A673 (cell line): ENCODE measurements at regions of chr9 and their contacts with region 1.

Region 1: GRCh38 chr9:27626244-27627187 is 53.2 kb upstream of the C9orf72 start:
- DNase-seq: no peak
- H3K4me3 ChIP-seq: no peak overlapping the region
- H3K27ac ChIP-seq: no peak overlapping the region
- H3K4me1 ChIP-seq: no peaks in the 10 kb centered on the region
- H3K27me3 ChIP-seq: no peaks in the 10 kb centered on the region
- CTCF ChIP-seq: no peak

Region 2: GRCh38 chr9:26612211-26612610 is 1014.3 kb before region 1 on chr9:
- CTCF ChIA-PET with region 1: no interaction called
- POLR2A ChIA-PET with region 1: no interaction called
- intact Hi-C with region 1: no loop called
- DNase-seq: no peak
- H3K4me3 ChIP-seq: no peak overlapping the region
- H3K27ac ChIP-seq: no peak overlapping the region
- H3K4me1 ChIP-seq: no peaks in the 10 kb centered on the region
- H3K27me3 ChIP-seq: no peaks in the 10 kb centered on the region
- CTCF ChIP-seq: no peak

Region 3: DNA sequence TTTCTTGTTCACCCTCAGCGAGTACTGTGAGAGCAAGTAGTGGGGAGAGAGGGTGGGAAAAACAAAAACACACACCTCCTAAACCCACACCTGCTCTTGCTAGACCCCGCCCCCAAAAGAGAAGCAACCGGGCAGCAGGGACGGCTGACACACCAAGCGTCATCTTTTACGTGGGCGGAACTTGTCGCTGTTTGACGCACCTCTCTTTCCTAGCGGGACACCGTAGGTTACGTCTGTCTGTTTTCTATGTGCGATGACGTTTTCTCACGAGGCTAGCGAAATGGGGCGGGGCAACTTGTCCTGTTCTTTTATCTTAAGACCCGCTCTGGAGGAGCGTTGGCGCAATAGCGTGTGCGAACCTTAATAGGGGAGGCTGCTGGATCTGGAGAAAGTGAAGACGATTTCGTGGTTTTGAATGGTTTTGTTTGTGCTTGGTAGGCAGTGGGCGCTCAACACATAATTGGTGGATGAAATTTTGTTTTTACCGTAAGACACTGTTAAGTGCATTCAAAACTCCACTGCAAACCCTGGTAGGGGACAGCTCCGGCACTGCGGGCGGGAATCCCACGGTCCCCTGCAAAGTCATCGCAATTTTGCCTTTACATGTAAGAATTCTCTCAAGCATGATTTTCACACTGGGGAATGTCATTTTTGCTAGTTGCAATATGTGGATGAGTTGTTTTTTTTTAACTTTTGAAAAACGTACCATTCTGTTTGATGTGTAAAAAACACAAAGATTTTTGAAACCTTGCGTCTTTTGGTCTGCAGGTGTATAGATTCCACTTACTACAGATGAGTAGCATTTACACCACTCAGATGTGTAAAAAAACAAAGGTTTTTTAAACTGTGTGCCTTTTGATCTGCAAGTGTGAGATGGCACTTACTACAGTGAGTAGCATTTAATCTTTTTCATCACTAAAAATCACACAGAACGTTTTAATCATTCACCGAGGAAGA is 52.6 kb before region 1 on chr9:
- CTCF ChIA-PET with region 1: no interaction called
- POLR2A ChIA-PET with region 1: interaction called, 13 read pairs
- intact Hi-C with region 1: no loop called
- DNase-seq: peak; percentile 96
- H3K4me3 ChIP-seq: peak overlapping the region; percentile 67
- H3K27ac ChIP-seq: peak overlapping the region; percentile 84
- H3K4me1 ChIP-seq: no peaks in the 10 kb centered on the region
- H3K27me3 ChIP-seq: no peaks in the 10 kb centered on the region
- CTCF ChIP-seq: no peak

Region 4: DNA sequence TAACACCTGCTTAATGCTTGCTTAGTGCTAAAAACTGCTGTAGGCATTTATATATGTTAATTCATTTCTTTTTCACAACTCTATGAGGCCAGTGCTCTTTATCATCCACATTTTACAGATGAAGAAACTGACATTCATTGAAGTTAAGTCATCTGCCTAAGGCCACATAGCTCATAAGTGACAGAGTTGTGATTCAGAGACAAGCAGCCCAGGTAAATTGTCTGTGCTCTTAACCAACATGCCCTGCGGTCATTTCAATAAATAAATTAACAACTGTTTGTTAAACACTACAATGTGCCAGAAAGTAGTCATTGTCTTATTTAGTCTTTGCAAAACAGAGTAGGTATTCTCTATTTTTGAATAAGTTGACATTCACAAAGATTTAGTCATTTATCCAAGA is 1301.2 kb after region 1 on chr9:
- CTCF ChIA-PET with region 1: no interaction called
- POLR2A ChIA-PET with region 1: no interaction called
- intact Hi-C with region 1: no loop called
- DNase-seq: no peak
- H3K4me3 ChIP-seq: no peak overlapping the region
- H3K27ac ChIP-seq: no peak overlapping the region
- H3K4me1 ChIP-seq: peaks cover 52% of the 10 kb centered on the region
- H3K27me3 ChIP-seq: no peaks in the 10 kb centered on the region
- CTCF ChIP-seq: no peak